Activated B cell treated with CpG ODN at 0.5 μM for 24 hours (primary cell): ENCODE measurements at regions of chr1 and their contacts with region 1.

Region 1: GRCh38 chr1:207298653-207299346 is 22.7 kb upstream of the CD55 start:
- DNase-seq: no peak
- ATAC-seq: no peak
- H3K4me3 Mint-ChIP-seq: peak overlapping the region; percentile 0
- H3K27ac Mint-ChIP-seq: peak overlapping the region; percentile 85
- H3K4me1 Mint-ChIP-seq: peaks cover 25% of the 10 kb centered on the region
- H3K27me3 Mint-ChIP-seq: no peaks in the 10 kb centered on the region
- CTCF ChIP-seq: no peak

Region 2: DNA sequence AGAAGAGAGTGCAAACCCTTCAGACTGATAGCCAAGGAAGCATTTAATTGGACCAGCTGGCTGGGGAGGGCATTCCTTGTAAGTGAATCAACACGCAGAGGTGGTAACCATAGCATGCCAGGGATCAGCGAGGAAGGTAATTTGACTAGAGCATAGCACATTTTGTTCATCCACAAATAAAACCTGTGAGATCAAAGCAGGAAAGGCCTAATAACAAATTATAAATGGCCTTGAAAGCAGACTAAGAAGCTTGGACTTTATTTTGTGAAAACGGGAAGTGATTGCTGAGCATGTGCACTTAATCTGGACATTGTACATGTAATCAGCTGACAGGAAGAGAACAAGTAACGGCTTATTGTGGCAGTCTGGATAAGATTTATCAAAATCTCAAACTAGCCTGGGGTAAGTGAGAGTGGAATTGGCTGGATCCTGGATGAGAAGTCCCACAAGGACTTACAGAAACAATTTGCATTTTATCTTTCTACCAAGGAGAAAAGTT is 11.0 kb after region 1 on chr1:
- CTCF ChIA-PET with region 1: no interaction called
- POLR2A ChIA-PET with region 1: no interaction called
- intact Hi-C with region 1: loop called (anchors 1 kb)
- DNase-seq: no peak
- ATAC-seq: peak; percentile 67
- H3K4me3 Mint-ChIP-seq: peak overlapping the region; percentile 77
- H3K27ac Mint-ChIP-seq: peak overlapping the region; percentile 91
- H3K4me1 Mint-ChIP-seq: peaks cover 27% of the 10 kb centered on the region
- H3K27me3 Mint-ChIP-seq: no peaks in the 10 kb centered on the region
- CTCF ChIP-seq: no peak